ENCODE measurements at regions of chr17 and their contacts with region 1.

Region 1: DNA sequence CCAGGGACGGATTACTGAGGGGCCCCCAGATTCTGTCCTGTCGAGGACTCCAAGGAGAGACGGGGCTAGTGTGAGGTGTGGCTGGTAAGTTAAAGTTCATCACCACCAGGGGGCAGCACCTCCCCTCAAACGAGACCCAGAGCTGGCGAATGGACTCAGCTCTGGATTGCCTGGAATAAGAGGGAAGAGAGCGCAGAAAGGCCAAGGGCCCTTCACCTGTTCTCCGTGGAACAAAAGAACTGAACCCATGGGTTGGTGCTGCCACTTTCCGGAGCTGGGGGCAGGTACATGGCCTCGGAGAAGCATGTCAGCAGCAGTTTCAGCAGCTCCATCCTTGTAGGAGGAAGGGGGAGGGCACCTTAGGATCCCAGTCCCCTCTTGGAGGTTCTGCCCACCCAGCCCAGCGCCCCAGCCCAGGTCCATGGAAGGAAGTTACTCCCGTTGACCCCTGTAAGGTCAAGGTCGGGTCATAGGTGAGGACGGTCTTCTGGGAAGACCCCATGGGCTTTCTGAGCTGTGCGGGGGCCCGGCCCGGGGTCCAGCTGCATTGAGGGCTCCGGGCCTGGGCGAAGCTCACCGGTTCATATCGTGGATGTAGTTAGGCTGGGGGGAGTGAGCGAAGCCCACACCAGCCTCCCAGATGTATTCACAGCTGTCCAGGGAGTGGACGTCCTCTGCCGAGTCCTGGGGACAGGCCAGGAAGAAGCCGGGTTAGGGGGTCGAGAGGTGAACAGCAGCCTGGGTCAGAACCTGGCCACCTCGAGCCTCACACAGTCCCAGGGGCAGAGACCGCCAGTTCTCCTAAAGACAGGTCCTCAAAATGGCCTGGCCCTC is 10.7 kb downstream of the HID1 start:
- DNase-seq: peak; percentile 74 to 93 (median 82)
- ATAC-seq: peak; percentile 79
- H3K4me3 ChIP-seq: no peak overlapping the region
- H3K4me3 Mint-ChIP-seq: peak overlapping the region; percentile 14
- H3K27ac ChIP-seq: no peak overlapping the region
- H3K27ac Mint-ChIP-seq: no peak overlapping the region
- H3K4me1 ChIP-seq: peaks cover 17% of the 10 kb centered on the region
- H3K4me1 Mint-ChIP-seq: peaks cover 4% of the 10 kb centered on the region
- H3K27me3 ChIP-seq: no peaks in the 10 kb centered on the region
- H3K27me3 Mint-ChIP-seq: no peaks in the 10 kb centered on the region
- CTCF ChIP-seq: peak; percentile 83

Region 2: GRCh38 chr17:74659898-74660297 is 302.0 kb before region 1 on chr17:
- CTCF ChIA-PET with region 1: interaction called, 6 read pairs
- POLR2A ChIA-PET with region 1: no interaction called
- intact Hi-C with region 1: loop called in 1 of 2 experiments (anchors 5 kb)
- DNase-seq: no peak
- ATAC-seq: no peak
- H3K4me3 ChIP-seq: no peak overlapping the region
- H3K4me3 Mint-ChIP-seq: no peak overlapping the region
- H3K27ac ChIP-seq: no peak overlapping the region
- H3K27ac Mint-ChIP-seq: no peak overlapping the region
- H3K4me1 ChIP-seq: peaks cover 6% of the 10 kb centered on the region
- H3K4me1 Mint-ChIP-seq: peaks cover 5% of the 10 kb centered on the region
- H3K27me3 ChIP-seq: peaks cover 5 to 12% of the 10 kb centered on the region in 2 experiments
- H3K27me3 Mint-ChIP-seq: peaks cover 52% of the 10 kb centered on the region
- CTCF ChIP-seq: no peak

Region 3: DNA sequence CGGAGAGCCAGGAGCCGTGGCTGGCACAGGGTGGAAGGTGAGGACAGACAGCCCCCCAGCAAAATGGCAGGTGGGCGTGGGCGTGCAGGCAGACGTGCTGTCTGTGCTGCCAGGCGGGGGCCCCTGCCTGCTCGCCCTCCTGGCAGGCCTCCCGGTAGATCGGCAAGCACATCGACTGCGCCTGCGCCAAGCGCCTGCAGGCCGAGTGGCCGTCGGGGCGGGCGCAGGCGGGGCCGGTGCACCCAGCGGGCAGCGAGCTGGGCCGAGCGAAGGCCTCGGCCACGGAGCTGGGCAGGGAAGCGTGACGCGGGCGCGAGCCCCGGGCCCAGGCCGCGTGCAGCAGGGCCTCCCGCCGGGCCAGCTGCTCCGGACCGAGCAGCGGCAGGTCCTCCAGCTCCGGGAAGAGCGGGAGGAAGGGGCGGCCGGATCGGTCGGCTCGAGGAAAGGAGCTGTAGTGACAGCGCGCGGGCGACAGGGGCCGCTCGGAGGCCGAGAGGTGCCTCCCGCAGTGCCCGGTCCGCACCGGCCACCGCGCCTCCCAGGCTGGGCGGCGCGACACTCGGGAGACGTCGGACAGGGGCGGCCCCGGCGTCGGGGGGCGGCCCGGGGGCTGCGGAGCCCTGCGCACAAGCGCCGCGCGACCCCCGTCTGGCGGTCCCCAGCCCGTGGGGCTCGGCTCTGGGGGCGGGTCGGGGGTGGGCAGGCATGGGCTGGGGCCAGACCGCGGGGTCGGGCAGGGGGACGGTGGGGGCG is 119.1 kb before region 1 on chr17:
- CTCF ChIA-PET with region 1: no interaction called
- POLR2A ChIA-PET with region 1: no interaction called
- intact Hi-C with region 1: no loop called
- DNase-seq: peak in 3 of 14 experiments; percentile 31 to 51 (median 51)
- ATAC-seq: peak; percentile 41
- H3K4me3 ChIP-seq: no peak overlapping the region
- H3K4me3 Mint-ChIP-seq: no peak overlapping the region
- H3K27ac ChIP-seq: no peak overlapping the region
- H3K27ac Mint-ChIP-seq: no peak overlapping the region
- H3K4me1 ChIP-seq: peaks cover 22% of the 10 kb centered on the region
- H3K4me1 Mint-ChIP-seq: peaks cover 10% of the 10 kb centered on the region
- H3K27me3 ChIP-seq: peaks cover 3 to 4% of the 10 kb centered on the region in 2 experiments
- H3K27me3 Mint-ChIP-seq: peaks cover 22% of the 10 kb centered on the region
- CTCF ChIP-seq: no peak

Region 4: GRCh38 chr17:74898376-74898946 is 63.4 kb before region 1 on chr17:
- CTCF ChIA-PET with region 1: no interaction called
- POLR2A ChIA-PET with region 1: no interaction called
- intact Hi-C with region 1: no loop called
- DNase-seq: no peak
- ATAC-seq: no peak
- H3K4me3 ChIP-seq: no peak overlapping the region
- H3K4me3 Mint-ChIP-seq: no peak overlapping the region
- H3K27ac ChIP-seq: no peak overlapping the region
- H3K27ac Mint-ChIP-seq: no peak overlapping the region
- H3K4me1 ChIP-seq: peaks cover 5% of the 10 kb centered on the region
- H3K4me1 Mint-ChIP-seq: peaks cover 5% of the 10 kb centered on the region
- H3K27me3 ChIP-seq: peaks cover 20 to 23% of the 10 kb centered on the region in 2 experiments
- H3K27me3 Mint-ChIP-seq: peaks cover 44% of the 10 kb centered on the region
- CTCF ChIP-seq: no peak

Region 5: DNA sequence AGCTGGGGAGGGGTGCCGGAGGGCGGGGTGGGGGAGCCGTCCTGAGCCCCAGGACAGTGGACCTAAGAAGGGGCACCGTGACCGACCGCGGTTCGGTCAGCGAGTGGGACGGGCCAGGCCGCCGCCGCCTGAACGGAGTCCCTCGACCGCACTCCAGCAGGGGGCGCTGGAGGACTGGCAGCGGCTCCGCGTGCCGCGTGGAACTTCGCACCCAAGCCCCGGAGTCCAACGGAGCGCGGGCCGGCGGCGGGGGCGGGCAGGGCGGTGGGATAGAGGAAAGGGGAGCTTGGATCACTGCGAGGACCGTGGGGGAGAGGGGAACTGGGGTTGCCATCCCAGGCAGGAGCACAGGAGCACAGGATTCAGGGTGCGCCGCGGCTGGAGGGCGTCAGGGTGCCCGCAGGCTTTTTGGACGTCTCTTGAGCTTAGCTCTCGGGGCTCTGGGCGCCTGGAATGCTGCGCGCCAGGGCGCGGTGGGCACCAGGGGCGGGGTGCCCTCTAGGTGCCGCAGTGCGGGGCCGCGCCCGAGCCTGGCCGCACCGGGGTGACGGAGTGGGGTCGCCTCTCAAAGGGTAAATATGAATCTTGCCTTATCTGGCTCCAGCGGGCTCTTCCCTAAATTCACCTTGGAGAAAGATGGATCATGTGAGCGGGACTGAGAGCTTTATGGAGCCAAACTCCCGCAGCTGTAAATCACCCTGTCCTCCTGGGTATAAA is 38.2 kb before region 1 on chr17:
- CTCF ChIA-PET with region 1: interaction called, 9 read pairs
- POLR2A ChIA-PET with region 1: no interaction called
- intact Hi-C with region 1: loop called (anchors 1 kb)
- DNase-seq: peak; percentile 55 to 84 (median 66)
- ATAC-seq: peak; percentile 79
- H3K4me3 ChIP-seq: peak overlapping the region; percentile 37
- H3K4me3 Mint-ChIP-seq: peak overlapping the region; percentile 25
- H3K27ac ChIP-seq: no peak overlapping the region
- H3K27ac Mint-ChIP-seq: no peak overlapping the region
- H3K4me1 ChIP-seq: peaks cover 25% of the 10 kb centered on the region
- H3K4me1 Mint-ChIP-seq: peaks cover 15% of the 10 kb centered on the region
- H3K27me3 ChIP-seq: peaks cover 48 to 57% of the 10 kb centered on the region in 2 experiments
- H3K27me3 Mint-ChIP-seq: peaks cover 78% of the 10 kb centered on the region
- CTCF ChIP-seq: peak; percentile 89

Region 6: DNA sequence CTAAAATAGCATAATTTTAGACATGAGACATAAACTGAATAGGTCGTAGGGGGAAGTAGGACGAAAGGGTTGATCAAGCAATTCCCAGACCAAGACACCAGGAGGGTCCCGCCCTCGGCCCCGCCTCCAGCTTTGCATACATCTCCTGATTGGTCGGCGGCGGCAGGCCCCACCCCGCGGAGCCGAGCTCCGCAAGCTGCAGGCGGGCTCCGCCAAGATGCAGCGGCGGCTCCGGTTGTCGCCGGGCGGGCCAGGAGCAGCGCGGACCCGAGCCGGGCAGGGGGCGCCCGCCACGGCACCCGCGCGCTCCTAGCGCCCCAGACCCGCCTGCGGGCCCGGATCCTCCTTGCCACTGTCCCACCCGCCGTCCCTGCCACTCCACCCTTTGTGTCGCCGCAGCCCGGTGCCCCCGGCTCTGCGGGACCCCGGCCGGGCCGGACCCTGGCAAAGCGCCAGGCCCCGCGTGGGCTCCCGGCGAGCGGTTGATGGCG is 25.6 kb after region 1 on chr17 and contains the start of gene CDR2L:
- CTCF ChIA-PET with region 1: interaction called, 15 read pairs
- POLR2A ChIA-PET with region 1: interaction called, 3 read pairs
- intact Hi-C with region 1: no loop called
- DNase-seq: peak; percentile 80 to 97 (median 90)
- ATAC-seq: peak; percentile 97
- H3K4me3 ChIP-seq: peak within 1 kb of the TSS; percentile 55
- H3K4me3 Mint-ChIP-seq: peak within 1 kb of the TSS; percentile 85
- H3K27ac ChIP-seq: no peak within 1 kb of the TSS
- H3K27ac Mint-ChIP-seq: peak within 1 kb of the TSS; percentile 19
- H3K4me1 ChIP-seq: peaks cover 21% of the 10 kb centered on the region
- H3K4me1 Mint-ChIP-seq: peaks cover 15% of the 10 kb centered on the region
- H3K27me3 ChIP-seq: peaks cover 7 to 9% of the 10 kb centered on the region in 2 experiments
- H3K27me3 Mint-ChIP-seq: peaks cover 4% of the 10 kb centered on the region
- CTCF ChIP-seq: no peak
- total RNA-seq, gene CDR2L: 0.08 TPM in 1 of 2 experiments, not detected in the other

Region 7: GRCh38 chr17:75012346-75013091 is 50.6 kb after region 1 on chr17 and contains the start of gene MRPL58:
- CTCF ChIA-PET with region 1: interaction called, 51 read pairs
- POLR2A ChIA-PET with region 1: interaction called, 7 read pairs
- intact Hi-C with region 1: loop called (anchors 1 to 2 kb)
- DNase-seq: peak; percentile 62 to 90 (median 75)
- ATAC-seq: peak; percentile 97
- H3K4me3 ChIP-seq: peak within 1 kb of the TSS; percentile 95
- H3K4me3 Mint-ChIP-seq: peak within 1 kb of the TSS; percentile 96
- H3K27ac ChIP-seq: peak within 1 kb of the TSS; percentile 7 to 52
- H3K27ac Mint-ChIP-seq: peak within 1 kb of the TSS; percentile 85
- H3K4me1 ChIP-seq: peaks cover 18% of the 10 kb centered on the region
- H3K4me1 Mint-ChIP-seq: peaks cover 35% of the 10 kb centered on the region
- H3K27me3 ChIP-seq: no peaks in the 10 kb centered on the region
- H3K27me3 Mint-ChIP-seq: no peaks in the 10 kb centered on the region
- CTCF ChIP-seq: peak; percentile 75
- total RNA-seq, gene MRPL58: 5.4 to 7.1 TPM

Region 8: GRCh38 chr17:75173526-75173925 is 211.7 kb after region 1 on chr17:
- CTCF ChIA-PET with region 1: interaction called, 17 read pairs
- POLR2A ChIA-PET with region 1: interaction called, 5 read pairs
- intact Hi-C with region 1: loop called in 1 of 2 experiments (anchors 10 kb)
- DNase-seq: no peak
- ATAC-seq: no peak
- H3K4me3 ChIP-seq: no peak overlapping the region
- H3K4me3 Mint-ChIP-seq: no peak overlapping the region
- H3K27ac ChIP-seq: no peak overlapping the region
- H3K27ac Mint-ChIP-seq: no peak overlapping the region
- H3K4me1 ChIP-seq: peaks cover 20% of the 10 kb centered on the region
- H3K4me1 Mint-ChIP-seq: peaks cover 19% of the 10 kb centered on the region
- H3K27me3 ChIP-seq: no peaks in the 10 kb centered on the region
- H3K27me3 Mint-ChIP-seq: no peaks in the 10 kb centered on the region
- CTCF ChIP-seq: no peak

Region 9: DNA sequence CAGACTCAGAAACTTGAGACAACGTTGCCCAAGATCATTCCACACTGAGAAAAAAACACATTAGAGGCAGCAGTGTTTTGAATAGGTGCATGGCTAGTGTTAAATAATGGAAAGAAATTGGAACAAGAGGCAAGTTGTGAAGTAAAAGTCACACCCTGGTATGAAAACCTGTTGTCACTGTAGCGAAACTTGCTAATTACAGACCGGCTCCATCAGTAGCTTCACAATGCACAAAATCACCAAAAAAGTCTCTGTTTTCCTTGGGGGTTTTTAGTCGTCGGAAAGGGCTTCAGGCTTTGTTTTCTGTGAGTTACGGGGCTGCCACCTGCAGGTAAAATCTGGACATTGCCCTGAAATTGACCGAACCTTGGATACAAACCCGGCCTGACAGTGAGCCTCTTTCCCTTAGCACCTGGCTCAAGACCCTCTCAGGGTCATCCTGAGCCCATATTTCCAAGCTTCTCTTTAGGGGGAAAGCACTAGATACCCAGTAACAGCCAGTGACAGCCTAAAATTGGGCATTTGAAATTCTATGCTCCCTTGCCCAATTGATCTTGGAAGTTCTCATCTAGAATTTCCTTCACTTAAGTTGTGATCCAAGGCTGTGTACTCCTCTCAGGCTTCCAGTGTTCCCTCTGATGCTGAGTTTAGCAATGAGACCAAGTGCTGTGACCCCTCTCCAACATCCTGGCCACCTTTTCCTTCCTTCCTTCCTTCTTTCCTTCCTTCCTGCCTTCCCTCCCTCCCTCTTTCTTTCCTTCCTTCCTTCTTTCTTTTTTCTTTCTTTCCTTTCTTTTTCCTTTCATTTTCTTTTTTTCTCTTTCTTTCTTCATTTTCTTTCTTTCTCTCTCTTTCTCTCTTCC is 450.8 kb after region 1 on chr17:
- CTCF ChIA-PET with region 1: no interaction called
- POLR2A ChIA-PET with region 1: no interaction called
- intact Hi-C with region 1: loop called in 1 of 2 experiments (anchors 1 kb)
- DNase-seq: peak; percentile 55 to 89 (median 66)
- ATAC-seq: peak; percentile 94
- H3K4me3 ChIP-seq: peak overlapping the region; percentile 11
- H3K4me3 Mint-ChIP-seq: peak overlapping the region; percentile 11
- H3K27ac ChIP-seq: no peak overlapping the region
- H3K27ac Mint-ChIP-seq: no peak overlapping the region
- H3K4me1 ChIP-seq: peaks cover 14% of the 10 kb centered on the region
- H3K4me1 Mint-ChIP-seq: peaks cover 16% of the 10 kb centered on the region
- H3K27me3 ChIP-seq: no peaks in the 10 kb centered on the region
- H3K27me3 Mint-ChIP-seq: no peaks in the 10 kb centered on the region
- CTCF ChIP-seq: peak; percentile 81